HepG2 (cell line): ENCODE measurements at regions of chr1 and their contacts with region 1.

Region 1: DNA sequence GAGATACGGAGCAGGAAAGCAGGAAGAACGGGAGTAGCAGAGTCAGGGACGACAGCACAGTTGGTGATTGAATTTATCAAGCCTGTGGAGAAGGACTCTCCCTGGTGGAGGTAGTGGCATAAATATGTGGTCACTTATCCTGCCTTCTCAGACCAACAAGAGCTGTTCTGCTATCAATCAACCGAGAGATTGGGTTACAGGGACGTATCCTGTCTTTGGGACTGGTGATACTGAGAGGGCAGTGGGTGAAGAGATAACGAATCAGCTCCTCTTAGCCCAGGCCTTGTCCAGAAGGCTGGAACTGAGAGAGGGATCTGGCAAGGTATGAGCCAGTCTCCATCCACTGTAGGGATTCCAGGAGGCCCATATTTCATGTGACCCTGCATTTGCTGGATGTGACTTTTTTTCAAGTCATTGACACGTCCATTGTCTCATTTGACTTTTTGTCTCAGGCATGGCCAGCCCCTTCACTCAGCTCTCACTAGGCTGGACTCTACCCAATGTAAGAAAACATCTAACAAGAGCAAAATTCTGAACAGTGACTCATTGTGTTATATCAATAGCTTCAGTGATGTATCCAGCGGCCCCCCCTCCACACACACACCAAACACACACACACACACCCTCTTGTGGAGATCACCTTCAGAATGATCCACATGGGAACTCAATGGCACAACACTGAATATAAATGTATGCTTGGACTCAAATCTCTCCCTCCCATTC is 11.3 kb downstream of the C1orf116 start:
- DNase-seq: peak; percentile 89
- ATAC-seq: peak; percentile 67
- H3K4me3 ChIP-seq: peak overlapping the region in 1 of 3 experiments; percentile 17; a peak in 1 of 6 replicates
- H3K27ac ChIP-seq: peak overlapping the region; percentile 56
- H3K4me1 ChIP-seq: peaks cover 77% of the 10 kb centered on the region
- H3K27me3 ChIP-seq: no peaks in the 10 kb centered on the region
- CTCF ChIP-seq: peak; percentile 45
- EP300 ChIP-seq: no peak; a peak in 1 of 4 replicates
- POLR2A ChIP-seq: no peak
- RAD21 ChIP-seq: no peak

Region 2: GRCh38 chr1:207004981-207005830 is 16.1 kb before region 1 on chr1:
- CTCF ChIA-PET with region 1: interaction called, 3 read pairs
- POLR2A ChIA-PET with region 1: interaction called, 11 read pairs
- in situ Hi-C with region 1: no loop called
- intact Hi-C with region 1: loop called (anchors 1 kb)
- DNase-seq: peak; percentile 73
- ATAC-seq: peak; percentile 80
- H3K4me3 ChIP-seq: no peak overlapping the region
- H3K27ac ChIP-seq: no peak overlapping the region
- H3K4me1 ChIP-seq: peaks cover 81% of the 10 kb centered on the region
- H3K27me3 ChIP-seq: no peaks in the 10 kb centered on the region
- CTCF ChIP-seq: peak; percentile 82
- EP300 ChIP-seq: no peak
- POLR2A ChIP-seq: no peak
- RAD21 ChIP-seq: no peak

Region 3: GRCh38 chr1:207032528-207033017 is 11.3 kb after region 1 on chr1 and contains the start of gene C1orf116:
- CTCF ChIA-PET with region 1: no interaction called
- POLR2A ChIA-PET with region 1: interaction called, 22 read pairs
- in situ Hi-C with region 1: no loop called
- intact Hi-C with region 1: no loop called
- DNase-seq: peak; percentile 60
- ATAC-seq: peak; percentile 89
- H3K4me3 ChIP-seq: peak within 1 kb of the TSS; percentile 42 to 55 (median 54)
- H3K27ac ChIP-seq: peak within 1 kb of the TSS; percentile 15
- H3K4me1 ChIP-seq: peaks cover 76% of the 10 kb centered on the region
- H3K27me3 ChIP-seq: no peaks in the 10 kb centered on the region
- CTCF ChIP-seq: no peak
- EP300 ChIP-seq: no peak
- POLR2A ChIP-seq: no peak
- RAD21 ChIP-seq: no peak
- total RNA-seq, gene C1orf116: 0.95 and 1.1 TPM in 2 replicates

Region 4: DNA sequence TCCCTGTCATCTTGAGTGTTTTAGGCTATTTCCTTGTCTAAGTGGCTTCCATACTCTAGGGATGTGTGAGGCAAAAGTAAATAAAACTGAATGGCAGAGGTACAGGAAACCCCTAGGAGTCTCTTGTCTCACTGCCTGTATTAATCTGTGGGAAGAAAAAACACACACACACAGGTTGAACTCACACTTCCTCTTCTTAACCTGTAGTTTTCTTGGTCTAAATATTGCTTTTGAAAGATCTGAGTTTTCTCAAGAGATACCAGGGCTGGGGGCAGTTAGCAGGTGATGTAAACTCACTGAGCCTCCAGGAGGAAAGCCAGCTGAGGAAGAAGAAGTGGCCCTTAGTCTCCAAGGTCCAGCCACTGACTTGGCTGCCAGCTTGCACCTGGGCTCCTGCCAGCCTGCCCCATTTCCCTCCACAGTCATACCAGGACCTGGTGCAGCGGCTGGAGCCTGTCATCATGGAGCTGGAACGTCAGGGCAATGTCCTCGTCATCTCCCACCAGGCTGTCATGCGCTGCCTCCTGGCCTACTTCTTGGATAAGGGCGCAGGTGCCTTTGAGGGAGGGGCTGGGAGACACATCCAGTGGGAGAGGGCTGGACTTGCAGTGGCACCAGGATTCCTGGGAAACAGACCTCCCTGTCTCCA is 48.7 kb after region 1 on chr1:
- CTCF ChIA-PET with region 1: no interaction called
- POLR2A ChIA-PET with region 1: no interaction called
- in situ Hi-C with region 1: no loop called
- intact Hi-C with region 1: no loop called
- DNase-seq: no peak
- ATAC-seq: no peak
- H3K4me3 ChIP-seq: no peak overlapping the region
- H3K27ac ChIP-seq: no peak overlapping the region
- H3K4me1 ChIP-seq: peaks cover 21% of the 10 kb centered on the region
- H3K27me3 ChIP-seq: no peaks in the 10 kb centered on the region
- CTCF ChIP-seq: no peak
- EP300 ChIP-seq: no peak
- POLR2A ChIP-seq: no peak
- RAD21 ChIP-seq: no peak

Region 5: DNA sequence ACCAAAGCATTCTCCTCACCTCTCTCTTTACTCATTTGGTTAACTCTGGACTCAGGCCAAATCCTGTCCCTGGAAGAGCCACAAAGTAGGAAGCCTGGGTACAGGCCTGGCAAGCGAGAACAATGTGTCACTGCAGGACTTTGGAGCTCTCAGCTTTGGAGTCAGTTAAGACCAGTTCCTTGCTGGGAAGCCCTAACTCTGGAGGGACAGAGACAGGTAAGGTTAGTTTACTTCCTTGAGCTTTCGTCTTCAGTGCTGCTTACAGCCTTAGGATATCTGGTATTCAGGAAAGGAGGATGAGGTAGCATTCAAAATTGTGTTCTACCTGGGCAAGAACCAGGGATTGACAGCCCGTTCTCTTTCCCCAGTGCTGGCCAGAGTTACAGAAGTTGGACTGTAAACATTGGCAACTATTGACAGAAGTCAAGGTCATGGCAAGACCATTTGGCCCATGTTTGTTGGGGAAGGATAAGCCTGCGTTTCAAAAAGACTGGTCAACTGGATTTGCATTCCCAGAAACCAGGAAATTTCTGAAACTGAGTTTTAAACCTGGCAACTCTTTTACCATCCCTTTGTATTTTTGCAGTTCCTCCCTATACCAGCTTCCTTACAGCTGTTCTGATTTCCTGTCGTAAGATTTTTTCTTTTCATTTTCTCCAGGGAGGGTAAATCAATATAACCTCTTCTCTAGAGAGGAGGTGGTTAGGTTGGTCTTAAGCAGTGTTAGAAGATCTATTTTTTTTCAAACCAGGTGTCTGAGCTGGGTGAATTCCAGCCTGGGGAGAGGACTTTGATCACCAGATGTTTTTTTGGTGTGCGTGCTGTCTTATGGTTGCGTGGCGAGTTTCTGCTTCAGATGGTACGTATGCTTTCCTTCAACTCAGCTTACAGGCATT is 67.7 kb after region 1 on chr1 and contains the start of gene C4BPB:
- CTCF ChIA-PET with region 1: no interaction called
- POLR2A ChIA-PET with region 1: no interaction called
- in situ Hi-C with region 1: no loop called
- intact Hi-C with region 1: no loop called
- DNase-seq: peak; percentile 95
- ATAC-seq: peak; percentile 93
- H3K4me3 ChIP-seq: peak within 1 kb of the TSS; percentile 70 to 94 (median 75)
- H3K27ac ChIP-seq: peak within 1 kb of the TSS; percentile 97
- H3K4me1 ChIP-seq: peaks cover 67% of the 10 kb centered on the region
- H3K27me3 ChIP-seq: no peaks in the 10 kb centered on the region; a peak in 1 of 5 replicates
- CTCF ChIP-seq: no peak
- EP300 ChIP-seq: peak; percentile 64 to 91; a peak in 3 of 4 replicates
- POLR2A ChIP-seq: peak in 1 of 2 experiments; percentile 63; a peak in 2 of 4 replicates
- RAD21 ChIP-seq: peak; percentile 25; the same call in 1 of the 2 replicates
- total RNA-seq, gene C4BPB: 115 and 155 TPM in 2 replicates